GM10248 (cell line): ENCODE measurements at regions of chr15 and their contacts with region 1.

Region 1: GRCh38 chr15:55775316-55775715 is 32.4 kb upstream of the PRTG start:
- DNase-seq: no peak
- CTCF ChIP-seq: no peak

Region 2: GRCh38 chr15:55758580-55758986 is 16.7 kb before region 1 on chr15:
- CTCF ChIA-PET with region 1: interaction called, 23 read pairs
- POLR2A ChIA-PET with region 1: no interaction called
- DNase-seq: no peak
- CTCF ChIP-seq: no peak

Region 3: GRCh38 chr15:55764398-55764797 is 10.9 kb before region 1 on chr15:
- CTCF ChIA-PET with region 1: interaction called, 23 read pairs
- POLR2A ChIA-PET with region 1: no interaction called
- DNase-seq: no peak
- CTCF ChIP-seq: no peak

Region 4: GRCh38 chr15:55789066-55789660 is 13.8 kb after region 1 on chr15:
- CTCF ChIA-PET with region 1: interaction called, 19 read pairs
- POLR2A ChIA-PET with region 1: interaction called, 5 read pairs
- DNase-seq: peak; percentile 41
- CTCF ChIP-seq: peak; percentile 50

Region 5: GRCh38 chr15:55799291-55800212 is 24.2 kb after region 1 on chr15:
- CTCF ChIA-PET with region 1: interaction called, 10 read pairs
- POLR2A ChIA-PET with region 1: no interaction called
- DNase-seq: peak; percentile 54
- CTCF ChIP-seq: peak; percentile 60